Caco-2 (cell line): ENCODE measurements at regions of chr1 and their contacts with region 1.

Region 1: GRCh38 chr1:244652699-244653466 is at the start of gene DESI2:
- DNase-seq: peak; percentile 98 to 99
- H3K4me3 ChIP-seq: peak within 1 kb of the TSS; percentile 93
- H3K4me3 Mint-ChIP-seq: no peak within 1 kb of the TSS
- H3K27ac Mint-ChIP-seq: peak within 1 kb of the TSS; percentile 42
- H3K4me1 ChIP-seq: peaks cover 22% of the 10 kb centered on the region
- H3K4me1 Mint-ChIP-seq: peaks cover 15% of the 10 kb centered on the region
- H3K27me3 ChIP-seq: no peaks in the 10 kb centered on the region
- H3K27me3 Mint-ChIP-seq: no peaks in the 10 kb centered on the region
- CTCF ChIP-seq: peak; percentile 30 to 50
- total RNA-seq, gene DESI2: 47.7 and 51.0 TPM in 2 replicates

Region 2: DNA sequence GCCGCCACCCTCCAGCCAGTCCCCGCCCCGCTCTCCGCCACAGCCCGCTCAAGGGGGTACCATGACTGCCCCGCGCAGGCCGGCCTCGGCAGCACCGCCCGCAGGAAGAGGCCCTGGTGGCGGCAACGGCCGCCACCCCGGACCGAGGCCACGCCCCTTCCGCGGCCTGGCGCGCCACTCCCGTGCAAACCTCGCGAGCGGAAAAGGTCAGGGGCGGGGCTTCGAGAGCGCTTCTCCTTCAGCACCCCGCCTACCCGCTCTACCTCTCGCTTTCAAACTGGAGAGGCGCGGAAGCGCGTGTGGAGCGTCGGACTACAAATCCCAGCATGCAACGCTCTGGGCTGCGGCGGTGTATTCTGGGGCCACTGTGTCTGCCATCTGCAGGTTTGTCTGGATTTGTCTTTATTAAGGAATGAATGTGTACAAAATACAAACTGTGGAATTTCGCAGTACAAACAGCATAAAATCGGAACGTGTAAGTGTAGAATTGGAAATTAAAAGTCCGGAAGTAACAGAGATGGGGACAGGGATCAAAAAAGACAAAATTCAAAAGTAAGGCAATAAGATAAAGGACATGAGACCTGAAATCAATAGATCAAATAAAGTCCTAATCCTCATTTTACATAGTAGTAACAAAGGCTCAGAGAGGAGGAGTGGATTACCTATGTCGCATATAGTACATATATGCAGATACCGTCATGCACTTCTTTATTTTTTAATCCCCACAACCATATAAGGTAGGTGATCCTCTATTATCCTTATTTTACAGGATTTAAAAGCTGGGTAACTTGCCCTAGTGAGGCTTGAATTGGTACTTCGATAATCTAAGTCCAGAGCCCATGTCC is 200.7 kb before region 1 on chr1:
- CTCF ChIA-PET with region 1: no interaction called
- POLR2A ChIA-PET with region 1: no interaction called
- intact Hi-C with region 1: loop called (anchors 1 kb)
- DNase-seq: peak; percentile 98 to 99
- H3K4me3 ChIP-seq: peak overlapping the region; percentile 96
- H3K4me3 Mint-ChIP-seq: peak overlapping the region; percentile 76
- H3K27ac Mint-ChIP-seq: peak overlapping the region; percentile 75
- H3K4me1 ChIP-seq: peaks cover 38% of the 10 kb centered on the region
- H3K4me1 Mint-ChIP-seq: peaks cover 49% of the 10 kb centered on the region
- H3K27me3 ChIP-seq: no peaks in the 10 kb centered on the region
- H3K27me3 Mint-ChIP-seq: no peaks in the 10 kb centered on the region
- CTCF ChIP-seq: peak; percentile 30 to 33

Region 3: DNA sequence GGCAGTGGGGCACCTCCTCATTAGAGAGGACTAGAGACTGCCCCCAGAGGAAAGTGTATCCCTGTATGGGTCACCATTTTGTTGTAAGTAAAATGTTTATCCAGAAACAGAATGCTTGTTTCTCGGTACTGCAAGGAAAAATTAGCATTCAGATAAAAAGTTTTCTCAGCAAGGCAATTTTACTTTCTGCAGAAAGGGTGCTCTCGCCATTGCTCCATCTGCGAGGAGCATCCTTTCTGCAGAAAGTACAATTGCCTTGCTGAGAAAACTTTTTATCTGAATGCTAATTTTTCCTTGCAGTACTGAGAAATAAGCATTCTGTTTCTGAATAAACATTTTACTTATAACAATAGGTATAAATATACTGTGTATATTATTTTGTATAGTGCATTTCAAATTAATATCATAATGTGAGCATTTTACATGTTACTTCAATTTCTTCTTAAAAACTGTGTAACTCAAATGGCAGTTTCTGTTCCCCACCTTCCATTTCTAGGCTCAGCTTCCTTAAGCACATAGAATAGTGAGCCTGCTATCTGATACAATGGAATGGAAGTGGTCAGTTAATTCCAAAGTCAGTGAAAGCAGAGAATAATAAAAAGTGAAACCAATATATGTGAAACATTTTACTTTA is 76.5 kb before region 1 on chr1:
- CTCF ChIA-PET with region 1: no interaction called
- POLR2A ChIA-PET with region 1: no interaction called
- intact Hi-C with region 1: no loop called
- DNase-seq: no peak
- H3K4me3 ChIP-seq: no peak overlapping the region
- H3K4me3 Mint-ChIP-seq: no peak overlapping the region
- H3K27ac Mint-ChIP-seq: no peak overlapping the region
- H3K4me1 ChIP-seq: no peaks in the 10 kb centered on the region
- H3K4me1 Mint-ChIP-seq: no peaks in the 10 kb centered on the region
- H3K27me3 ChIP-seq: no peaks in the 10 kb centered on the region
- H3K27me3 Mint-ChIP-seq: no peaks in the 10 kb centered on the region
- CTCF ChIP-seq: no peak

Region 4: DNA sequence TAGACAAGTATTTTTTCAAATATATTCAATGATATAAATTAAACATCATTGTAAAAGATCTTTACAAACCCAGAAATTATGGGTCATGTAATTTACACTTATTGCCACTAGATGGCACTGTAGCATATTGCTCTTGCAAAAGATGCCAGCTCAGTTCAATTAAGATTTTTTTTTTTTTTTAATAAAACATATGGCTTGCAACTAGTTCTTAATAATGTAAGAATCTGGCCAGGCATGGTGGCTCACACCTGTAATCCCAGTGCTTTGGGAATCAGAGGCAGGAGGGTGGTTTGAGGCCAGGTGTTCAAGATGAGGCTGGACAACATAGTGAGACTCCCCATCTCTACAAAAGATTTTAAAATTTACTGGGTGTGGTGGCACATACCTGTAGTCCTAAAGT is 49.4 kb before region 1 on chr1:
- CTCF ChIA-PET with region 1: interaction called, 7 read pairs
- POLR2A ChIA-PET with region 1: no interaction called
- intact Hi-C with region 1: loop called (anchors 1 kb)
- DNase-seq: peak in 1 of 2 experiments; percentile 26
- H3K4me3 ChIP-seq: no peak overlapping the region
- H3K4me3 Mint-ChIP-seq: no peak overlapping the region
- H3K27ac Mint-ChIP-seq: no peak overlapping the region
- H3K4me1 ChIP-seq: no peaks in the 10 kb centered on the region
- H3K4me1 Mint-ChIP-seq: no peaks in the 10 kb centered on the region
- H3K27me3 ChIP-seq: no peaks in the 10 kb centered on the region
- H3K27me3 Mint-ChIP-seq: no peaks in the 10 kb centered on the region
- CTCF ChIP-seq: peak; percentile 60 to 81

Region 5: DNA sequence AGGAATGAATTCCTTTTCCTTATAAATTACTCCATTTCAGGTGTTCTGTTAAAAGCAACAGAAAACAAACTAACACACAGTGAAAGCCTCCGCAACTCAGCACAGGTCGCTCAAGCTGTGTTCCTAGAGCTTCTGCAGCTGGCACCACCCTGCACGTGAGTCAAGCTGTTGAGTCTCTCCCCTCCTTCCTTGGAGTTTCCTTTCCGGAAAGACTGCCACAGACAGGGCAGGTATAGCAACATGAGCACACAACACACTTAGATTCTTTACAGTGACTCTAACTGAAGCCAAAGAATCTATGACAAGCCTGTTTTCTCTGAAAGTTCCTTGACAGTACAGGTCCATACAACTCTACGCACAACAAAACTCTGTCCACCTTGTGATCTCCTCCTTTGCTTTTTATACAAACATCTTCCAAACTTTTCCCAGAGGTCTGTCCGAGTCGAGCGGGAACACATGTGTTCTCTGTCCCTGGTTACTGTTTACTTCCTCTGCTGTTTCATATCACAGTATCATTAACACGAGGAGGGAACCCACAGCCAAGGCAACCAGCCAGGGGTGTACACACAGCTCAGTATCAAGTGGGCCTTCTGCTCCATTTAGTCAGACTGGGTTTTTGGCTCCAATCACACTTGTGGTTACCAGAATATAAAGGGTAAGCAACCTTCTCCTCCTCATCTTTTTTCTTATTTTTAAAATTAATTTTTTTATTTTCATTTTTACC is 38.6 kb before region 1 on chr1:
- CTCF ChIA-PET with region 1: no interaction called
- POLR2A ChIA-PET with region 1: no interaction called
- intact Hi-C with region 1: loop called (anchors 2 kb)
- DNase-seq: no peak
- H3K4me3 ChIP-seq: no peak overlapping the region
- H3K4me3 Mint-ChIP-seq: no peak overlapping the region
- H3K27ac Mint-ChIP-seq: no peak overlapping the region
- H3K4me1 ChIP-seq: peaks cover 10% of the 10 kb centered on the region; the same call in 1 of the 2 replicates
- H3K4me1 Mint-ChIP-seq: peaks cover 18% of the 10 kb centered on the region
- H3K27me3 ChIP-seq: no peaks in the 10 kb centered on the region
- H3K27me3 Mint-ChIP-seq: no peaks in the 10 kb centered on the region
- CTCF ChIP-seq: no peak

Region 6: DNA sequence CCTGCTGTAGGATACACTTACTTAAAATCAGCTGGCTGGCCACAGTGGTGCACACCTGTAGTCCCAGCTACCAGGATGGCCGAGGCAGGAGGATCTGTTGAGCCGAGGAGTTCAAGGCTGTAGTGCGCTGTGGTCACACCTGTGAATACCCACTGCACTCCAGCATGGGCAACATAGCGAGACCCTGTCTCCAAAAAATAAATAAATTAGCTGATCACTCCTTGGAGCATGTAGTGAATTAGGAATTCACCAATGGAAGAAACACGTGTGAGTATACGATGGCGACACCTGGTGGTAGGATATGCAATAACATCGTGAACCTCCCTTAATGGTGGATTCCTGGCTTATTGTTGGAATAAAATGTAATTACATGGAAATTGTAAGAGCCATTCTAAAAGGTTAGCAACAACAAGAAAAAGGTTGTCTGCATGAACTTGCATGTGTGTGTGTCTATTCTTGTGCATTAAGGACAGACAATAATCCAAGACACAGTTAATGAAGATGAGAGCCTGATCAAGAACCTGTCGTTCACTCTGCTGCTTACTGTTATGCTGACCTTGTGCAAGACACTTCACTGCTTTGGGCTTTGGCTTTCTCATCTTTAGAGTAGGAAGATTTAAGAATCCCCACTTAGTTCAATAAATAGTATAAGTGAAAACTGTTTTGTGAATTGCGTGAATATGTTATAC is 144.0 kb after region 1 on chr1:
- CTCF ChIA-PET with region 1: no interaction called
- POLR2A ChIA-PET with region 1: no interaction called
- intact Hi-C with region 1: loop called (anchors 1 kb)
- DNase-seq: peak; percentile 63 to 74
- H3K4me3 ChIP-seq: no peak overlapping the region
- H3K4me3 Mint-ChIP-seq: no peak overlapping the region
- H3K27ac Mint-ChIP-seq: no peak overlapping the region
- H3K4me1 ChIP-seq: peaks cover 3% of the 10 kb centered on the region
- H3K4me1 Mint-ChIP-seq: peaks cover 9% of the 10 kb centered on the region
- H3K27me3 ChIP-seq: no peaks in the 10 kb centered on the region
- H3K27me3 Mint-ChIP-seq: no peaks in the 10 kb centered on the region
- CTCF ChIP-seq: peak; percentile 76 to 86

Region 7: DNA sequence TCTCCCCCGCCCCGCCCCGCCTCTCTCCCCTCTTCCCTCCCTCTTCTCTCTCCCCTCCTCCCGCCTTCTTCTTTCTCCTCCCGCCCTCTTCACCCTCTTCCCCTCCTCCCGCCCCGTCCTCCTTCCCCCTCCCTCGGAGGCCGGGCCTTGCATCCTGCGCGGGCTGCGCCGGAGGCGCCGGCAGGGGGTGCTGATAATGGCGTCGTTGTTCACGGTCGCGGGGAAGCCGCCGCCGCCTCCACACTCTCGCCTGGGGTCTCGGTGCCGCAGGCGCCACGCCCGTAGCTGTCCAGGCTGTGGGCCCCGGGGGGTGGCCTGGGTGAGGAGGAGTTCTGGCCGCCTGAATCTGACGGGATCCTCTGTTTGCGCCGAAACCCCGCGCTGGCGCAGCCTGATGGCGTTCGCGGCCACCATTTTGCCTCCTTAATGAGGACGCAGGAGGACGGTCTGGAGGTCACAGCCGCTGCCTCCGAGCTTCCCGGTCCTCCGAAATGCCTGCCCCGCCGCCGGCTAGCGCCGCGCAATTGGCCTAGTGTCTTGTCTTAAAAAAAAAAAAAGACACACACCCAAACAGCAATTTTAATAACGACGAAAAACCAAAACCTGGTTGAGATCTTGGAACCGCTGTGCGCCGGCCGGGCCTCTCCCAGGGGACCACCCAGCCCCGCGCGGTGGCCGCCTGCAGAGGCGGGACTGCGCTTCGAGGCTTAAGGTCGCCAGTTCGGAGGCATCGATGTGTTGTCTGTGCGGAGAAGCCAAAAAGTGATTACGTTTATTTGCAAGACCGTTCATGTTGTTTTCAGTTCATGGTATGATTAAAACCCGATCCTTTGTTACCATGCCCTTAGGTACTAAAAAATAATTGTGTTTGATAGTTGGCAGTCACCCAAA is 318.0 kb after region 1 on chr1:
- CTCF ChIA-PET with region 1: no interaction called
- POLR2A ChIA-PET with region 1: no interaction called
- intact Hi-C with region 1: loop called (anchors 5 kb)
- DNase-seq: peak; percentile 97
- H3K4me3 ChIP-seq: peak overlapping the region; percentile 82
- H3K4me3 Mint-ChIP-seq: peak overlapping the region; percentile 91
- H3K27ac Mint-ChIP-seq: peak overlapping the region; percentile 99
- H3K4me1 ChIP-seq: peaks cover 16% of the 10 kb centered on the region
- H3K4me1 Mint-ChIP-seq: peaks cover 20% of the 10 kb centered on the region
- H3K27me3 ChIP-seq: no peaks in the 10 kb centered on the region
- H3K27me3 Mint-ChIP-seq: no peaks in the 10 kb centered on the region
- CTCF ChIP-seq: peak; percentile 54 to 79